GM12878 (cell line): ENCODE measurements at regions of chr1 and their contacts with region 1.

Region 1: GRCh38 chr1:177585622-177586129 is 384.2 kb downstream of the SEC16B start:
- DNase-seq: peak; percentile 25
- ATAC-seq: peak; percentile 92
- H3K4me3 ChIP-seq: no peak overlapping the region
- H3K27ac ChIP-seq: no peak overlapping the region
- H3K4me1 ChIP-seq: no peaks in the 10 kb centered on the region
- H3K27me3 ChIP-seq: no peaks in the 10 kb centered on the region
- CTCF ChIP-seq: no peak
- EP300 ChIP-seq: peak in 1 of 2 experiments; percentile 47; a peak in 1 of 4 replicates
- POLR2A ChIP-seq: no peak
- RAD21 ChIP-seq: no peak

Region 2: GRCh38 chr1:177471244-177471643 is 114.4 kb before region 1 on chr1:
- CTCF ChIA-PET with region 1: no interaction called
- POLR2A ChIA-PET with region 1: no interaction called
- RAD21 ChIA-PET with region 1: no interaction called
- SMC1A ChIA-PET with region 1: no interaction called
- in situ Hi-C with region 1: no loop called
- intact Hi-C with region 1: no loop called
- DNase-seq: no peak
- ATAC-seq: no peak
- H3K4me3 ChIP-seq: no peak overlapping the region
- H3K27ac ChIP-seq: no peak overlapping the region
- H3K4me1 ChIP-seq: no peaks in the 10 kb centered on the region
- H3K27me3 ChIP-seq: no peaks in the 10 kb centered on the region
- CTCF ChIP-seq: no peak
- EP300 ChIP-seq: no peak
- POLR2A ChIP-seq: no peak
- RAD21 ChIP-seq: no peak

Region 3: GRCh38 chr1:177567407-177567806 is 18.3 kb before region 1 on chr1:
- CTCF ChIA-PET with region 1: interaction called, 4 read pairs
- POLR2A ChIA-PET with region 1: no interaction called
- RAD21 ChIA-PET with region 1: no interaction called
- SMC1A ChIA-PET with region 1: interaction called, 27 read pairs
- in situ Hi-C with region 1: no loop called
- intact Hi-C with region 1: no loop called
- DNase-seq: no peak
- ATAC-seq: peak; percentile 80
- H3K4me3 ChIP-seq: no peak overlapping the region
- H3K27ac ChIP-seq: no peak overlapping the region
- H3K4me1 ChIP-seq: no peaks in the 10 kb centered on the region
- H3K27me3 ChIP-seq: no peaks in the 10 kb centered on the region
- CTCF ChIP-seq: peak in 2 of 3 experiments; percentile 21; a peak in 3 of 6 replicates
- EP300 ChIP-seq: no peak
- POLR2A ChIP-seq: no peak
- RAD21 ChIP-seq: no peak

Region 4: DNA sequence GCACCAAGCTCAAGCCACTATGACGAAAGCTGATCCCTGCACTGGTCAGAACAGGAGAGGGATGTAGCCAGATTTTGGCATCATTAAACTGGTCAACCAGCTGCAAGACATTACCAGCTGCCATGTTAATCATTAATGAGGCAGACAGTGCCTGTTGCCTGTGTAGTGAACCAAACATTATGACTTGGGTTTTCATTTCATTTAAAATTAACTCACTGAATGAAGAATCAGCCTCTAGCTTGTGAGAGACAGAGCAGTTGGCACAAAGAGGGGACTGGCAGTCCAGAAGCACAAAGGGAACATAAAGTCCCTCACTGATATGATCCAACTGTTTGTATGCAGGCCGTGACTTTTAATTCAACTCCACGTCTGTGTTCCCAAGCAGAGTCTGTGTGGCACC is 65.3 kb after region 1 on chr1:
- CTCF ChIA-PET with region 1: interaction called, 3 read pairs
- POLR2A ChIA-PET with region 1: interaction called, 10 read pairs
- RAD21 ChIA-PET with region 1: no interaction called
- SMC1A ChIA-PET with region 1: interaction called, 4 read pairs
- in situ Hi-C with region 1: no loop called
- intact Hi-C with region 1: no loop called
- DNase-seq: peak; percentile 7
- ATAC-seq: peak; percentile 78
- H3K4me3 ChIP-seq: no peak overlapping the region
- H3K27ac ChIP-seq: no peak overlapping the region
- H3K4me1 ChIP-seq: no peaks in the 10 kb centered on the region
- H3K27me3 ChIP-seq: no peaks in the 10 kb centered on the region; a peak in 2 of 4 replicates
- CTCF ChIP-seq: no peak
- EP300 ChIP-seq: no peak
- POLR2A ChIP-seq: no peak
- RAD21 ChIP-seq: no peak